ENCODE measurements at regions of chr2 and their contacts with region 1.

Region 1: GRCh38 chr2:43542285-43542937 is 53.4 kb downstream of the THADA start:
- DNase-seq: no peak
- H3K4me3 ChIP-seq: no peak overlapping the region
- H3K27ac ChIP-seq: no peak overlapping the region
- H3K27me3 ChIP-seq: no peaks in the 10 kb centered on the region
- CTCF ChIP-seq: peak; percentile 50

Region 2: DNA sequence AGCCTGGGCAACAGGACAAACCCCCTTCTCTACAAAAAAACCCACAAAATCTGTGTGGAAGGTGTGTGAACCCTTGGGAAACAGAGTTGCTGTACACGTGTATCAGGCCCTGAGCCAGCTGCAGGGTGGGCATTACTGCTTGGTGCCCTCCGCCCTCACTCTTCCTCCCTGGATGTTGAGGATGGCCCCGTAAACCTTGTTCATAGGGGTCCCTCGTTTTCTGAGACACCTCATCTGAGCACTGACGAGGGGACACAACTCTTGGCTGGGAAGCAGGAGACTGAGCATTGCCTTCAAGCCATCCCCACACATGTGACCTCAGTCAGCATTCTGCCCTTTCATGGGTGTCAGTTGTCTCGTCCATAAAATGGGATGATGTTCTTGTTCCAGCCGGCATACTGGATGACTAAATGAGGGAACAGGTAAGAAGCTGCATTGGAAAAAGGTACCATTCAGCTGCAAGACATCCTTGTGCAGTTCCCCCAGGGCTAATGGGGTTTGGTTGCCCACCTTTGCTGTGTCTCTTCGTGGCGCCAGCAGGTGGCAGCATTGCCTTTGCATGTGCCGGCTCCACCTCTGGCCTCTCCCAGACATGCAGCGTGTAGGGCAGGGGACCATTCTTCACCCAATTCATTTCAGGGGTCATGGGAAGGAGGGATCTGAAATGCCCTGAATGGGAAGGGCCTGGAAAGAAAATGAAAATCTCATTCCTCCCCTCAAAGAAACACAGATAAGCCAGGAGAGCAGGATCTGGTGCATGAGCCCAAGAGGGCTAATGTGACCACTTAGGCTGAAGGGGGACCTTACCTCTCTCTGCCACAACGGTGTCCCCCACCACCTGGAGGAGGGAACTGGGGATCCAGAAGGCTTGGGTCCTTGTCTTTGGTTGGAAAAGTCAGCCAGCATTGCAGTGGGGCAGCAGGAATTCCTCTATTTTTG is 713.7 kb before region 1 on chr2:
- CTCF ChIA-PET with region 1: interaction called, 34 read pairs
- POLR2A ChIA-PET with region 1: no interaction called
- DNase-seq: no peak
- H3K4me3 ChIP-seq: no peak overlapping the region
- H3K27ac ChIP-seq: no peak overlapping the region
- H3K27me3 ChIP-seq: no peaks in the 10 kb centered on the region
- CTCF ChIP-seq: peak; percentile 87

Region 3: GRCh38 chr2:42944779-42945415 is 597.5 kb before region 1 on chr2:
- CTCF ChIA-PET with region 1: interaction called, 24 read pairs
- POLR2A ChIA-PET with region 1: no interaction called
- DNase-seq: no peak
- H3K4me3 ChIP-seq: no peak overlapping the region
- H3K27ac ChIP-seq: no peak overlapping the region
- H3K27me3 ChIP-seq: no peaks in the 10 kb centered on the region
- CTCF ChIP-seq: no peak

Region 4: DNA sequence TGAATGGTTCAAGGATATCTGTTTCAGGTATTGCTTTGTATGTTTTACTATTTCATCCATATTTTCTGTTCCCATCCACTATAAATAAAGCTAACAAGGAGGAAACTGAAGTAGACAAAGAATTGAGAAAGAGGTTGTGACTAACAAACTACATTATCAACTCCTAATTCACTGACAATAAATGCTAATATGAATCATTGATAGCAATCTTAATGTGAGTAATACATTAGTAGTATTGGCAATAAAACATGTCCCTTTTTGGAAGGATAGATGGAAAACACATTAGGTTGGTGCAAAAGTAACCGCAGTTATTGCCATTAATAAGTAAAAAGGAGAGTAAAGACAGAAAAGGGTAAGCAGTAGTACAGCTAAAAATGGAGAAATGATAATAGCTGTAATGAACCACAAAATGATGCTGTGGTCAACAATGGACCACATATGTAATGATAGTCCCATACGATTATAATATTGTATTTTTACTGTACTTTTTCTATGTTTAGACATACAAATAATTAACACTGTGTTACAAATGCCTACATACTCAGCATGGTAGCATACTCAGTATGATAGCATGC is 51.3 kb before region 1 on chr2:
- CTCF ChIA-PET with region 1: interaction called, 14 read pairs
- POLR2A ChIA-PET with region 1: no interaction called
- DNase-seq: no peak
- H3K4me3 ChIP-seq: no peak overlapping the region
- H3K27ac ChIP-seq: no peak overlapping the region
- H3K27me3 ChIP-seq: no peaks in the 10 kb centered on the region
- CTCF ChIP-seq: no peak

Region 5: DNA sequence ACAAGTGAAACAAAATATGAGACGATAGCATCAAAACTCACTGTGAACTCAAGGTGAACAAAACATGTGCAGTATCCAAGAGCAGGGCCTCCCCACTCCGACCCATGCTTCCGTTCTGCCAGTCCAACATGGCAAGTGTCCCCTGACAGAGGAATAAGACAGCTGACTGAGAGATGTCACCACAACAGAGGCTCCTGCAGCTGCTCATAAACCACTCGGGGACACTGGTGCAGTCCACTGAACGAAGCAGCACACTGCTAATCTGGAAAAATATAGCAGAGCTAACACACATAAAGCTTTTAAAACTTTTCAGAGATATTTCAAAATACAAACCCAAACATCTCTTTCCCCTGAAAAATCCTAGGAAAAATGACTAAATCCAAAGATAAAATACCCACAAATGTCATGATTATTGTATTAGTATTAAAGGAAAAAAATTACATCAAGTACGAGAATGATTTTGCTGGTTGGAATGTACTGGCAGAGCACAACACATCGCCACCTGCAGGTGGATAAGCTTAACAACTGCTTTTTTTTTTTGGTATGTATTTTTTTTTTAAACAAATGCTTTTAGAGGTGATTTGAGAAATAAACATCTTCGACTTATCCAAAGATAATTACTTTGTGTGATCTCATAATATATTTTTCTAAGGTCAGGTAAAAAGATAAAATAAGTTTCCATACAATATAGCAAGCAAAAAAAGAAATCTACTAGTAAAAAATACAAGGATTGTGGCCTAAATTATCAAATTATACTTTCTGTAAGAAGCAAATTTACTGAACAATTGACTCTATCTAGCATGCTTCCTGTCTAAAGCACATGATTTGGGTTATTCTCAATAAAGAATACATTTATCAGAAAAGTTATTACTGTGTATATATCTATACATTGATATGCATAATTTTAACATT is 34.8 kb after region 1 on chr2:
- CTCF ChIA-PET with region 1: interaction called, 12 read pairs
- POLR2A ChIA-PET with region 1: no interaction called
- DNase-seq: peak; percentile 32
- H3K4me3 ChIP-seq: no peak overlapping the region
- H3K27ac ChIP-seq: no peak overlapping the region
- H3K27me3 ChIP-seq: no peaks in the 10 kb centered on the region
- CTCF ChIP-seq: peak; percentile 84

Measured in AG04450 (cell line).